ENCODE measurements at regions of chr10 and their contacts with region 1.

Region 1: GRCh38 chr10:44725404-44725803 is 185.7 kb upstream of the TMEM72 start:
- DNase-seq: no peak
- ATAC-seq: peak; percentile 63

Region 2: GRCh38 chr10:44801383-44802327 is 76.3 kb after region 1 on chr10:
- intact Hi-C with region 1: loop called (anchors 10 kb)
- DNase-seq: peak; percentile 92
- ATAC-seq: peak; percentile 89

Region 3: DNA sequence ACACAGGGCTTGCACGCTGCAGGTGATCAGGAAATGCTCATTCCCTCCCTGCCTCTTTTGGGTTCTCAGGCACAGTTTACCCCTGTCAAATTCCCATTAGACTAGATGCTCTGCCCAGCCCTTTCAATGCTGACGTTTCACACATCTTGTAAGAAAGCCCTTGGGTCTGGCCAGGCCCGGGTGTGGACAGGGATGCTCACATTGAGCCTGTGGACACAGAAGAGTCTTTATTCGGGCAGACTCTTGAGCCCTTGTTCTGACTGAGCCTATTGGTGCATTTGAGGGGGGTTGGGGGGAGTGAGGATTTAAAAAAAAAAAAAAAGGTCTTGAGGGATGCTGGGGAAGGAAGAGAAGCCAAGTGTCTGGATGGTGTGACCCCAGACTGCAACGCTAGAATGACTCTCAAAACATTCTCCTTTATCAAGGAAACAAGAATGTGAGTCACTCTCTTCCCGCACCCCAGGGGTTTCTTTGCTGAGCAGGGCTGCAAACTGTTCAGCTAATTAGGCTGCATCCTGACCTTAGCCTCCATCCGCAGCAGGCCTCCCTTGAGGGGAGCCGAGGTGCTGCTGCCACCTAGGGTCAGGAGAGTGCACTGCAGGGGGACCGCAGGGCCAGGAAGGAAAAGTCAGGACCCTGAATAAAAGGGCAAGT is 132.1 kb after region 1 on chr10:
- intact Hi-C with region 1: loop called (anchors 10 kb)
- DNase-seq: peak; percentile 88
- ATAC-seq: peak; percentile 92